ENCODE measurements at regions of chr12 and their contacts with region 1.

Region 1: DNA sequence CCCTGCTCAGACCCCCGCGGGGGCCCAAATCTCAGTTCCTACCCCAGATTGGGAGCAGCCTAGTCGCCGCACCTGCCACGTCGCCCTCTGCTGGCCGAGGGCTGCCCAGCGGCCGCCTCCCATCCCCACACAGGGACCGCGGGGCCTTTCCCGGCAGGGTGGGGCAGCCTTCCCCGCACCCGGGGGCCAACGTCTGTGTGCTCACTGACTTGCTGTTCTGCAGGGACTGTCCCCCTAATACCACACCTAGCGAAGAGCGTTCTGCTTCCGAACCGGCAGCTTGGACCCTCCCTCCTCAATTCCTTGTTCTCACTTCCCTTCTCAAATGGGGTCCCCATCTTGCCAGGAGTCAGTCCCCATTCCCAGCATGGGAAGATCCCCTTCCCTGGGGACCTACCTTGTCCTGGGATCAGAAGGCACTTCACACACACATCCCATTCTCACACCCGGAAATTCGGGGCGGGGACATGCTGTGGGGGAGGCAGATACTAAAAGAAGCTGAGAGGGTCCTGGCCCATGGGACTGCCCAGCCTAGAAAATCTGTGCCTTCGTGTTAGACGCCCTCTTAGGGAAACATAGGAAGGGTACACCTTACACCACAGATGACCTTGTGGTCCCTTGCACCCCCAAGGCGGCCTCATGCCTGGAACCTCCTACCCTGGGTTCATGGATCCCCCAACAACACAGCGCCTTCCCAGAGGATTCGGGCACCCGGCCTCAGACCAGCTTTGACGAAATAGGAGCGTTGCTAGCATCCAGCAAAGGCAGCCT is 16.4 kb downstream of the ACVRL1 start:
- DNase-seq: peak; percentile 69
- H3K4me3 Mint-ChIP-seq: no peak overlapping the region
- H3K27ac Mint-ChIP-seq: no peak overlapping the region
- H3K4me1 Mint-ChIP-seq: peaks cover 12% of the 10 kb centered on the region
- H3K27me3 Mint-ChIP-seq: no peaks in the 10 kb centered on the region

Region 2: GRCh38 chr12:51874013-51874412 is 49.7 kb before region 1 on chr12:
- CTCF ChIA-PET with region 1: interaction called, 10 read pairs
- POLR2A ChIA-PET with region 1: no interaction called
- intact Hi-C with region 1: no loop called
- DNase-seq: no peak
- H3K4me3 Mint-ChIP-seq: no peak overlapping the region
- H3K27ac Mint-ChIP-seq: no peak overlapping the region
- H3K4me1 Mint-ChIP-seq: peaks cover 5% of the 10 kb centered on the region
- H3K27me3 Mint-ChIP-seq: peaks cover 17% of the 10 kb centered on the region

Region 3: DNA sequence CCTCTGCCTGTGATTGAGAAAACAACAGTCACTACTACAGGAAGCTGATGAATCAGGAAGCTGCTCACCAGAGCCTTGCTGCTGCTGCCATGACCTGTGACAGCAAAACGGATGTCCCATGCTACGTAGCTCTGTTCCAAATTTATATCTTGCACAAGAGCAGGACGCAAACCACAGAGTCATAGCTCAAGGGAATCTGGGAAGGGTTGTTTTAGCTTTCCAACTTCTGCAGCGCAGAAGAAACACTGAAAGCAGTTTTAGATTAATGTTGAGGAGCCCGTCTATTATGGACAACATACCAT is 37.7 kb before region 1 on chr12:
- CTCF ChIA-PET with region 1: interaction called, 14 read pairs
- POLR2A ChIA-PET with region 1: no interaction called
- intact Hi-C with region 1: no loop called
- DNase-seq: peak; percentile 69
- H3K4me3 Mint-ChIP-seq: peak overlapping the region; percentile 35
- H3K27ac Mint-ChIP-seq: peak overlapping the region; percentile 56
- H3K4me1 Mint-ChIP-seq: peaks cover 14% of the 10 kb centered on the region
- H3K27me3 Mint-ChIP-seq: no peaks in the 10 kb centered on the region

Region 4: GRCh38 chr12:51911788-51912711 is 11.6 kb before region 1 on chr12:
- CTCF ChIA-PET with region 1: interaction called, 21 read pairs
- POLR2A ChIA-PET with region 1: no interaction called
- intact Hi-C with region 1: no loop called
- DNase-seq: no peak
- H3K4me3 Mint-ChIP-seq: no peak overlapping the region
- H3K27ac Mint-ChIP-seq: no peak overlapping the region
- H3K4me1 Mint-ChIP-seq: no peaks in the 10 kb centered on the region
- H3K27me3 Mint-ChIP-seq: peaks cover 14% of the 10 kb centered on the region

Region 5: DNA sequence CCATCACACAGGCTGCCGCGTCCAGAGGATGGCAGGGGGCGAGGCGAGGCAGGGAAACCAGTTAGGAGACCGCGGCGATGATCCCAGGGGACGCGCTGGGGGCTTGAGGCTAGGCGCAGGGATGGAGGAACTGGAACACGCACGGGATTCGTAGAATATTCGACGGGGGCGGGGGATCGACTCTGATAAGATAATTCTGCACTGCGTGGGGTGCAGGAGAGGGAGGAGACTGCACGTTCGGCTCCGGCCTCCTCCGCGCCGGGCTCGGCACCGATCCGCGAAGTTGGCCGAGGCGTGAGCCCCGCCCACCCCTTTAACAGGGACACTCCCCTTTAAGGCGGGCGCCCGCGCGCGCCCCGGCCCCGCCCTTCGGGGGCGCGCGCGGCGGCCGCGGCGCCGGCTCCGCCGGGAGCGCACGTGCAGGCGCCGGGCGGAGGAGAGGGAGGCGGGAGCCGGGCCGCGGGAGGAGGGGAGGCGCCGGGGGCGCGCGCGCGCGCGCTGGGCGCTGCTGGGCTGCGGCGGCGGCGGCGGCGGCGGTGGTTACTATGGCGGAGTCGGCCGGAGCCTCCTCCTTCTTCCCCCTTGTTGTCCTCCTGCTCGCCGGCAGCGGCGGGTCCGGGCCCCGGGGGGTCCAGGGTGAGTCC is 27.6 kb after region 1 on chr12 and contains the start of gene ACVR1B:
- CTCF ChIA-PET with region 1: interaction called, 11 read pairs
- POLR2A ChIA-PET with region 1: no interaction called
- intact Hi-C with region 1: no loop called
- DNase-seq: peak; percentile 93
- H3K4me3 Mint-ChIP-seq: peak within 1 kb of the TSS; percentile 81
- H3K27ac Mint-ChIP-seq: peak within 1 kb of the TSS; percentile 47
- H3K4me1 Mint-ChIP-seq: peaks cover 40% of the 10 kb centered on the region
- H3K27me3 Mint-ChIP-seq: peaks cover 6% of the 10 kb centered on the region
- total RNA-seq, gene ACVR1B: 8.0 to 8.3 TPM

Region 6: GRCh38 chr12:51970904-51971646 is 47.4 kb after region 1 on chr12:
- CTCF ChIA-PET with region 1: interaction called, 33 read pairs
- POLR2A ChIA-PET with region 1: no interaction called
- intact Hi-C with region 1: loop called (anchors 2 kb)
- DNase-seq: peak; percentile 75
- H3K4me3 Mint-ChIP-seq: peak overlapping the region; percentile 67
- H3K27ac Mint-ChIP-seq: peak overlapping the region; percentile 66
- H3K4me1 Mint-ChIP-seq: peaks cover 61% of the 10 kb centered on the region
- H3K27me3 Mint-ChIP-seq: peaks cover 6% of the 10 kb centered on the region

Region 7: DNA sequence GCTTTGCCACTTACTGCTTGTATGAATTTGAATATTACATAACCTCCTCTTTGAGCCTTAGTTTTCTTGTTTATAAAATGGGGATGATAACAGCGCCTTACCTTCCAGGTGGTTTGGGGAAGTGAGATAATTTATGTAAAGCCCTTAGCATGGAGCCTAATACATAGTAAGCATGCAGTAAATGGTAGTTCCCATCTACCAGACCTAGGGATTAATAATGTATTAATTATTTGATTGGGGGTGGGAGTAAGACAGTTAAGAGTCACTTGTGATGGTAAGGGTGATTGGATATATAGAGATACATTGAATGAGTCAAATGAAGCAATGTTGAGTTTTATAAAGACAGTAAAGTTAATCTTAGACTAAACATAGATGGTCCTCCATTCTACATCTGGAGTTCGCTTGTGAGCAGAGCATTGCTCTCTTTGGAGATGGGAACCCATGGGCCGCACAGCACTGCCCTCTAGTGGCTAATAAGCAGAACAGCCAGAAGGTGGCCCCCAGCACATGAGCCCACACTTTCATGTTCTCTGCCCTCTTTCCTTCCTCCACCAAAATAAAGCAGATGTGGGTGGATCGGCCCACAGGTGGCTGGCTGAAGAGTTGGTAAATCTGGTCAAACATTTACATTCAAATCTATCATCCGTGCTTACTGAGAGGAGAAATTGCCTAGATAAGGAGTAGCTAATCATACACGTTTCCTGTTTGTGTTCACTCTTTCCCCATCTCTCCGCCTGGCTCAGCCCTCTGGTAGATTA is 56.5 kb after region 1 on chr12:
- CTCF ChIA-PET with region 1: interaction called, 33 read pairs
- POLR2A ChIA-PET with region 1: no interaction called
- intact Hi-C with region 1: loop called (anchors 1 kb)
- DNase-seq: peak; percentile 79
- H3K4me3 Mint-ChIP-seq: no peak overlapping the region
- H3K27ac Mint-ChIP-seq: peak overlapping the region; percentile 57
- H3K4me1 Mint-ChIP-seq: peaks cover 34% of the 10 kb centered on the region
- H3K27me3 Mint-ChIP-seq: no peaks in the 10 kb centered on the region

Measured in activated CD4-positive, alpha-beta memory T cell treated with anti-CD3 and anti-CD28 coated beads for 36 hours (primary cell).